Activated naive CD4-positive, alpha-beta T cell treated with anti-CD3 and anti-CD28 coated beads for 36 hours (primary cell): ENCODE measurements at regions of chrX and their contacts with region 1.

Region 1: GRCh38 chrX:22135994-22136684 is 104.0 kb downstream of the PHEX start:
- DNase-seq: peak; percentile 17
- H3K4me3 Mint-ChIP-seq: no peak overlapping the region
- H3K27ac Mint-ChIP-seq: no peak overlapping the region
- H3K4me1 Mint-ChIP-seq: peaks cover 12% of the 10 kb centered on the region
- H3K27me3 Mint-ChIP-seq: no peaks in the 10 kb centered on the region

Region 2: DNA sequence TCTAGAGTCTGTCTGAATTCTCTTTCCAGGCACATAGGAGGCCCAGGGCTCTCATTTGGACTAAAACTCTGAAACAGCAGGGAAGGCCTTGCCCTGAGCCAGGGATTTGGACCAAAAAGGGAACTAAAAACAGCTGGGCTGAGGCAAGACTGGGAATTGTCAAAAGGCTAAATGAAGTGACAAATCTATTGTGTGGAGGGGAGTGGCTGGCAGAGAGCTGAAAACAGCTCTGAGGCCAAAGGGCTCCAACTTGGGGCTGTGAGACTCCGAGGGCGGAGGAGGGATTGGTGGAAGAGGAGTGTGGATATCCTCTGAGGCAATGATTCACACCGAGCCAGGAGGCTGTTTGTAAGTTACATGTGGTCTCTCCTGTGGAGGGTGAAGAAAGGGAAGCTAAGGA is 40.9 kb before region 1 on chrX:
- CTCF ChIA-PET with region 1: no interaction called
- intact Hi-C with region 1: no loop called
- DNase-seq: no peak
- H3K4me3 Mint-ChIP-seq: no peak overlapping the region
- H3K27ac Mint-ChIP-seq: no peak overlapping the region
- H3K4me1 Mint-ChIP-seq: peaks cover 8% of the 10 kb centered on the region
- H3K27me3 Mint-ChIP-seq: no peaks in the 10 kb centered on the region

Region 3: DNA sequence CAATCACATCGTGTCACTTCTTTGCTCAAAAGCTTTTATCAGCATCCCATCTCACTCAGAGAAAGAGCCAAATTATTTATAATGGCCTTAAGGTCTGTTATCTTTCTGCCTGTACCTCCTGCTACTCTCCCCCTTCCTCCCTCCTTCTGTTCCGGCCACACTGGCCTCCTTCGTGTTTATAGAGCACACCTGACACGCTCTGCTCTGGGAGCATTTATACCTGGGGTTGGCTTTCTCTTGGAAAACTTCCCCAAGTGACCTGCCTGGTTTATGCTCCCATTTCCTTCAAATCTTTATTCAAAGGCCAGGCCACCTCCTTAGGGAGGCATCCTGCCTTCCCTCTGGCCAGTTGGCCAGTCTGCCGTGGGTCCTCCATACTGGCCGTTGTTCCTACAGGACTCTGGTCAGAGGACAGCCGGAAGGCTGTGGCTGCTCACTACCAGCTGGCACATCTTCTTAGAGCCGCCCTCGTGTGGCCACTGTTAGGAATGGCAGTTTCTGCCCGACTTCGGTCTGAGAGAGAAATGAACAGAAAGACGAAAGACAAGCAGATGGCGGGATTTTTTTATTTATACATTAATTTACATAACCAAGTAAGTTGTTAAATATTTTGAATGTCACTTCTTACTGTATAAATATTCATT is 56.4 kb after region 1 on chrX:
- CTCF ChIA-PET with region 1: interaction called, 5 read pairs
- intact Hi-C with region 1: loop called (anchors 1 kb)
- DNase-seq: peak; percentile 71
- H3K4me3 Mint-ChIP-seq: no peak overlapping the region
- H3K27ac Mint-ChIP-seq: no peak overlapping the region
- H3K4me1 Mint-ChIP-seq: peaks cover 3% of the 10 kb centered on the region
- H3K27me3 Mint-ChIP-seq: no peaks in the 10 kb centered on the region

Region 4: GRCh38 chrX:22748093-22748999 is 612.2 kb after region 1 on chrX:
- CTCF ChIA-PET with region 1: no interaction called
- intact Hi-C with region 1: loop called (anchors 1 kb)
- DNase-seq: peak; percentile 38
- H3K4me3 Mint-ChIP-seq: no peak overlapping the region
- H3K27ac Mint-ChIP-seq: no peak overlapping the region
- H3K4me1 Mint-ChIP-seq: no peaks in the 10 kb centered on the region
- H3K27me3 Mint-ChIP-seq: peaks cover 4% of the 10 kb centered on the region

Region 5: DNA sequence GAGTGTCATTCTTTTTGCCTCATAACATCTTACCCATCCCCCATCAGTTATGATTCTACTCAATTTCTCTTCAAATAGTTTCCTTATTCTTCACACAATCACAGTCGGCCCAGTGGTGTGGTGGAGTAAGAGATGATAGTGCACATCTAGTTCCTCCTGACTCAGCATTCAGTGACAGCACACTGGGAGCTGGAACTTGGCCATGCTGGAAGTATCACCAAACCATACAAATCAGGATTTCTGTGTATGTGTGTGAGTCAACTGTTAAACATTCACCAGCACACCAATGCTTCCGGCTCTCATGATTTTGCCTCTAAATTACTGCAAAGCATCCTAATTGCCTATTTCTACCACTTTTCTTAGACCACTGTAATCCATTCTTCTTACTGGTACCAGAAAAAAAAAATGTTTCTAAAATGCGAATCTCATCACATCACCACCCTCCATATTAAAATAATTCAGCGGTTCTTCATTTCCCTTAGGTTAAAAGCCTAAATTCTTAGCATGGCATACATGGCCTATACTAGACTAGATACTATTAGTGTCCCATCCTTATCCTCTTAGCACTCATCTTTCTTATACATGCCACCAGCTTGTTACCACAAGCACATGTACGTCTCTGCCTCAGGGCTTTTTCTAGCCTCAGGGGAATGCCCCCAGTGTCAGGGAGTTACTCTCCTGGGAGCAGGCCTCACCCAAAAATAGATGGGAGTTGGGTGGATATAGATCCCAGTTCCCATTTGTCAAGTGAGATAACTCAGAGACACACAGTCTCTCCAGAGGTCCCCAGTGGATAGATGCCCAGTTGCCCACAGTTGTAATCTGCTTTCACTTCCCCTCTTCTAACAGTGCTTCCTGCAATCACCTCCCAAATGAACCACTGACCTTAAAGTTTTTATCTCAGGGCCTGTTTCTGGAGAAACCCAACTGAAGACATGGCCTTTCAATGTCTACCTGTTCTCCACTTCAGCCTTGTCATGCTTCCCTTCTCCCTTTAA is 814.4 kb after region 1 on chrX:
- CTCF ChIA-PET with region 1: no interaction called
- intact Hi-C with region 1: no loop called
- DNase-seq: no peak
- H3K4me3 Mint-ChIP-seq: no peak overlapping the region
- H3K27ac Mint-ChIP-seq: no peak overlapping the region
- H3K4me1 Mint-ChIP-seq: no peaks in the 10 kb centered on the region
- H3K27me3 Mint-ChIP-seq: no peaks in the 10 kb centered on the region

Region 6: DNA sequence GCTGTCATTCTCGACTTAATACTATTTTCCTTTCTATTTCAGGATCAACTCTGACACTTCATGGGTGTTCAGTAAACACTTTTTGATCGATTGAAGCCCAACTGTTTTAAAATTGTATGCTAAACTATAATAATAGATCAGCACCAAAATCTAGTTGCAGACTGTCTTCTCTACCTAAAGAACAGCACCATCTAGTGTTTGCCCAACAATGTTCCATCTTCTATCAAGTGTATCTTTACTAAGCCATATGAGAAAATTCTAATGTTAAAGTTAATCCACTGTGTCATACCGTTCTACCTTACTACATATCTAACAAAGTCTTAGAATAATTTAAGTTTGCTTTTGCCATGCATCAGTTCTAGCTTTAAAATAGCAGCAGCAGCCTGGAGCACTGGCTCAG is 1418.2 kb after region 1 on chrX:
- CTCF ChIA-PET with region 1: no interaction called
- intact Hi-C with region 1: loop called (anchors 5 kb)
- DNase-seq: no peak
- H3K4me3 Mint-ChIP-seq: no peak overlapping the region
- H3K27ac Mint-ChIP-seq: no peak overlapping the region
- H3K4me1 Mint-ChIP-seq: no peaks in the 10 kb centered on the region
- H3K27me3 Mint-ChIP-seq: peaks cover 4% of the 10 kb centered on the region